ENCODE measurements at regions of chr14 and their contacts with region 1.

Region 1: DNA sequence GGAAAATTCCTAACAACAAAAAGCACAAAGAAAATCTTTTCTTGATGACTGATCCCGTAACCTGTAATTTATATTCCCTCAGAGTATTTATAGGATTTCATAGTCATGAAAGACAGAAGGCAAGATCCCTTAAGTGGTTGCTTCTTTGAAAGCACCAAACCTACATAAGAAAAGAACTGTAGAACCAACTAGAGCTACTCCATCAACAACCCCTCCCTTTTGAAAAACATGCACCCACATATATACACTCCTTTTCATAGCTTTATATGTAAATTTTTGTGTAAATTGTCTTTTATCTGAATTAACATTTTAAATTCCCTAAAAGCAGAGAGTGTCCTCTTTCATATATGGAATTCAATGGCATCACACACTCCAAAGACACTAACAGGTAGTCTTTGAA is 215.3 kb downstream of the CEP128 start:
- DNase-seq: no peak
- H3K4me3 ChIP-seq: no peak overlapping the region
- CTCF ChIP-seq: no peak

Region 2: DNA sequence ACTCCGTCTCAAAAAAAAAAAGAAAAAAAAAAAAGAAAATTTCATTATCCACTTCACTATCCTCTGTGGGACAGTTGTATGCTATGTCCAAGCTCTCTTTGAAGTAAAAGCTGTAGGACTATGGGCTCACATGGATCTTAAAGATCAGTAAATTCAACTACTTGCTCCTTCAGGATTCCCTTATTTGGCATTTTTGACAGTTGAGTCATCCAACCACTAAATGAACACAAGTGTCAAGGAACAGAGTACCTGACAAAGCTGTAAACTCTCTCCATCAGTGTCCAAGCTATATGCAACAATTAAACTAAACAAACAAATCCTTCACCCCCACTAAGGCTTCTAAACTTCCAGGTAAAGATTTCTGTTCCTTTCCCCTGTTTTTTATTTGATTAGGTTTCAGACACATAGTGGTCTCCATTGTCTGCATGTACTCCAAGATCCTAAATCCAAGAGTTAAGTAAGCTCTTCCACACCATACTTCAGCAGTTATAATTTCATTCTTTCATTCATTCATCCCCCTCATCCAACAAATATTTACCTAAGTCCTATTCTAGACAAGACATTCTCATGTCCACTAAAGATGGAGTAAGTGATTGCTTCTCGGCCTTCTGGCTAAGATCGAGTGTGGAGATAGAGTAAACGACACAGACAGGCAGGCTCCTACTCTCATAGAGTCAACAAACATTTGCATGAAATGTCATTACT is 38.4 kb after region 1 on chr14:
- in situ Hi-C with region 1: loop called (anchors 5 kb)
- DNase-seq: peak; percentile 6
- H3K4me3 ChIP-seq: no peak overlapping the region
- CTCF ChIP-seq: no peak

Measured in astrocyte of the cerebellum (primary cell).